ENCODE measurements at regions of chr5 and their contacts with region 1.

Region 1: DNA sequence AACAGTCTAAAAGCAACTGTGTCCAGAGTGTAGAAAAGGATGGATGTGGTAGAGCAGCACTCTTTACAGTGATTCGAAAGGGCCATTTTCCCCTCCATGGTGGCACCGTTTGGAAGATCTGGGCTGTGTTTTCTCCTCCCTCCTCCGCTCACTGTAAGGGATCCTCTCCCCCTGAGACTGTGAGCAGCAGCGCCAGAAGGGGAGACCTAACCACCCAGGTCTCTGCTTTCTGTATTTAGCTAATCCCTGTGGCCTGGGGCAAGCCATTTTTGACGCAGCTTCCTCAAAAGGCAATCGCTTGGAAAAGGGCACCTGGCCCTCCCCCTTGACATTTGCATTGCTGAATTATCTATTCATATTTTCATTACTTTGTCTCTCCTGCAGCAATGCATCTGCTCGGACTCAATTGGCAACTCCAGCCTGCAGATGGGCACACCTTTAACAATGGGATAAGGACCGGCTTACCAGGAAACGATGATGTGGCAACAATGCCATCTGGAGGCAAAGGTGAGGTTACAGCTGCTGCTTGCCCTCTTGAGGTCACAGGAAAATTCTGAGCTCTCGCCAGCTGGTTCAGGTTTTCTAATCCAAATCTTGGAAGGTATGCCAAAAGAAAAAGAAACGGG is 244.3 kb upstream of the WWC1 start:
- DNase-seq: peak; percentile 63
- H3K4me3 ChIP-seq: no peak overlapping the region
- H3K27ac ChIP-seq: no peak overlapping the region
- H3K4me1 ChIP-seq: peaks cover 0 to 7% (median 0%) of the 10 kb centered on the region in 4 donors
- H3K27me3 ChIP-seq: no peaks in the 10 kb centered on the region
- CTCF ChIP-seq: peak; percentile 43 to 57 (median 51)
- EP300 ChIP-seq: no peak
- POLR2A ChIP-seq: no peak

Region 2: GRCh38 chr5:167730121-167730520 is 317.0 kb before region 1 on chr5:
- in situ Hi-C with region 1: loop called in 3 of 4 experiments (anchors 10 to 25 kb)
- intact Hi-C with region 1: no loop called
- DNase-seq: no peak
- H3K4me3 ChIP-seq: no peak overlapping the region
- H3K27ac ChIP-seq: no peak overlapping the region
- H3K4me1 ChIP-seq: no peaks in the 10 kb centered on the region
- H3K27me3 ChIP-seq: no peaks in the 10 kb centered on the region
- CTCF ChIP-seq: no peak
- EP300 ChIP-seq: no peak
- POLR2A ChIP-seq: no peak

Measured in transverse colon (tissue), 4 donors.